A549 (cell line): ENCODE measurements at regions of chr17 and their contacts with region 1.

Region 1: DNA sequence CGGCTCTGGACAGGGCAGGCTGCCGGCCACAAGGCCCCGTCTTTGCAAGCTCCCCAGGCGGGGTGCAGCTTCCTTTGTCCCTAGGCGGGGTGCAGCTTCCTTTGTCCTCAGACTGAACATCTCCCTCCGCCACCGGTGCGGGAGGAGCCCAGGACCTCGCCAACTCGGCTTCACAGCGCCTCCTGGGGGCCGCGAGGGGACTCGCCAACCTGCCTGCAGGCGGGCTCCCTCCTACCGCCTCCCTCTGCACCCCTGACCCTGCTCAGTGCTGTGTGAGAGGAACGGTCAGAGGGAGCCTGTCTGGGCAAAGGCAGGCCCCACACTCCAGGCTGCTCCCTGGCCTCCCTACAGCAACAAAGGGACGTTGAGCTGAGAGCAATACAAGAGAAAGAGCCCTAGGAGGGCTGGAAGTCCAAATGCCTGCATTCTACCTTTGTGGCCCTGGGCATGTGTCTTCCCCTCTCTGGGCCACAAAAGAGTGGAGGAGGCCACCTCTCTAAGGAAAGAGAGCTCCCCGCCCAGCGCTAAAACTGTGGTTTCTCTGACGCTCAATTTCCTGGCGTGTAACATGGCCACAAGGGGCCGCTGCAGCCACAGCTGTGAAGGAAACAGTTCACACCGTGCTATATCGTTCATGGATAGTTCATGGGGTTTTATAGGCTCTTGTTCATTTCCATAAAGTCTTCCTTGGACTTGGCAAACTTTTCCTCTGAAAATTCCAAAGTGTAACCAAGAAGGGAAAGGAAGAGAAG is 20.9 kb upstream of the KRT19 start:
- DNase-seq: peak; percentile 94 to 96
- ATAC-seq: peak; percentile 79 to 91
- H3K4me3 ChIP-seq: peak overlapping the region; percentile 33
- H3K27ac ChIP-seq: peak overlapping the region; percentile 89 to 96
- H3K4me1 ChIP-seq: peaks cover 40% of the 10 kb centered on the region
- CTCF ChIP-seq: peak; percentile 99
- EP300 ChIP-seq: no peak
- POLR2A ChIP-seq: peak; percentile 16; the same call in 1 of the 2 replicates
- RAD21 ChIP-seq: peak; percentile 93 to 97

Region 2: GRCh38 chr17:40818733-40819527 is 730.1 kb before region 1 on chr17:
- CTCF ChIA-PET with region 1: interaction called, 12 read pairs
- POLR2A ChIA-PET with region 1: interaction called, 9 read pairs
- DNase-seq: peak; percentile 80 to 88
- ATAC-seq: peak; percentile 93 to 95
- H3K4me3 ChIP-seq: peak overlapping the region; percentile 79
- H3K27ac ChIP-seq: peak overlapping the region; percentile 86 to 94
- H3K4me1 ChIP-seq: peaks cover 16% of the 10 kb centered on the region
- CTCF ChIP-seq: no peak
- EP300 ChIP-seq: no peak
- POLR2A ChIP-seq: peak; percentile 41
- RAD21 ChIP-seq: no peak; a peak in 1 of 5 replicates

Region 3: GRCh38 chr17:40903129-40904065 is 645.6 kb before region 1 on chr17:
- CTCF ChIA-PET with region 1: interaction called, 246 read pairs
- POLR2A ChIA-PET with region 1: interaction called, 4 read pairs
- DNase-seq: peak; percentile 94 to 96
- ATAC-seq: peak; percentile 86 to 91
- H3K4me3 ChIP-seq: peak overlapping the region; percentile 33
- H3K27ac ChIP-seq: peak overlapping the region; percentile 91 to 93
- H3K4me1 ChIP-seq: peaks cover 34% of the 10 kb centered on the region
- CTCF ChIP-seq: no peak
- EP300 ChIP-seq: peak; percentile 71 to 74; a peak in 4 of 5 replicates
- POLR2A ChIP-seq: no peak
- RAD21 ChIP-seq: peak; percentile 2 to 29; a peak in 1 of 5 replicates

Region 4: DNA sequence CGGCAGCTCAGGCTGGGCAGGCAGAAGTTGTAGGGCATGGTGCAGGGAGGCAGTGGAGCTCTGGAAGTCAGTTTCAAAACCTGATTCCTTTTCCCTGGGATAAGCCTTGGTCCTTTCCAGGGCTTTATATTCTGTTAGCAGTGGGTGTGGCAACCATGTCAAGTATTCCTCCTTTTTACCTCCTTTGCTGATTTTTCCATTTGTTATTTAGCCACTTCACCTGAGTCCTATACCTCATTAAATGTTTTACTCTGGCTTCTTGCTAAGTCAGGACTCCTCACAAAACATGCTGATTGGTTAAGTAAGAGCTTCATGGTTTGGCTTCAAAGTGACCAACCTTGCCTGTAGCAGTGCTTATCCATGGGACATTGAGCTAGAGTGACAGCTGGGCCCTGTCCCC is 179.3 kb before region 1 on chr17 and contains the start of gene KRT33B:
- CTCF ChIA-PET with region 1: interaction called, 20 read pairs
- POLR2A ChIA-PET with region 1: no interaction called
- DNase-seq: no peak
- ATAC-seq: no peak
- H3K4me3 ChIP-seq: no peak within 1 kb of the TSS
- H3K27ac ChIP-seq: no peak within 1 kb of the TSS
- H3K4me1 ChIP-seq: no peaks in the 10 kb centered on the region
- CTCF ChIP-seq: no peak
- EP300 ChIP-seq: no peak
- POLR2A ChIP-seq: no peak
- RAD21 ChIP-seq: no peak
- polyA plus RNA-seq, gene KRT33B: not detected in 2 replicates

Region 5: GRCh38 chr17:41486809-41487720 is 62.0 kb before region 1 on chr17:
- CTCF ChIA-PET with region 1: interaction called, 119 read pairs
- POLR2A ChIA-PET with region 1: no interaction called
- DNase-seq: peak in 1 of 2 experiments; percentile 48
- ATAC-seq: peak in 1 of 2 experiments; percentile 78; a peak in 4 of 6 replicates
- H3K4me3 ChIP-seq: no peak overlapping the region
- H3K27ac ChIP-seq: no peak overlapping the region
- H3K4me1 ChIP-seq: no peaks in the 10 kb centered on the region
- CTCF ChIP-seq: peak; percentile 45
- EP300 ChIP-seq: no peak
- POLR2A ChIP-seq: no peak
- RAD21 ChIP-seq: peak; percentile 29 to 49; a peak in 2 of 5 replicates

Region 6: DNA sequence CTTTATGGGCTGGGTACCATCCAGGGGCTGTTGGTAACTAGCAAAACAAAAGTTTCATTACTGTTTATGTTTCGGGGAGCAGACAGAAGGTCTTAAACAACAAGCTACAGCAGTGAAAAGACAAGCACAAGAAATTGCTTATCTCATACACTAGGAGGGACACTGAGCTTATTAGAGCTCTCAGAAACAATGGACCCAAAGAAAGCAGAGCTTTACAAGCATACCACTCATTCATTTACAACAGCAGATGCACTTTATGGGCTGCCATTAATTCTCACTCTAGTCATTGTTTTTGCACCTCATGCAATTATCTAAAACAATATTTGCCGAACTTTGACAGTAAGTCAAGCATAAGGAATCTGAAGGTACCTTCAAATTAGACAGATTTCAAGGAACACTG is 53.5 kb after region 1 on chr17:
- CTCF ChIA-PET with region 1: interaction called, 28 read pairs
- POLR2A ChIA-PET with region 1: no interaction called
- DNase-seq: no peak
- ATAC-seq: peak; percentile 44 to 65; a peak in 4 of 6 replicates
- H3K4me3 ChIP-seq: no peak overlapping the region
- H3K27ac ChIP-seq: no peak overlapping the region
- H3K4me1 ChIP-seq: no peaks in the 10 kb centered on the region
- CTCF ChIP-seq: no peak
- EP300 ChIP-seq: no peak
- POLR2A ChIP-seq: no peak
- RAD21 ChIP-seq: no peak